ENCODE measurements at regions of chr6 and their contacts with region 1.

Region 1: GRCh38 chr6:100573167-100573566 is 108.4 kb upstream of the SIM1 start:
- DNase-seq: peak in 1 of 2 experiments; percentile 5
- H3K4me3 ChIP-seq: no peak overlapping the region
- H3K4me3 Mint-ChIP-seq: no peak overlapping the region
- H3K27ac Mint-ChIP-seq: no peak overlapping the region
- H3K4me1 ChIP-seq: no peaks in the 10 kb centered on the region
- H3K4me1 Mint-ChIP-seq: no peaks in the 10 kb centered on the region
- H3K27me3 ChIP-seq: no peaks in the 10 kb centered on the region
- H3K27me3 Mint-ChIP-seq: no peaks in the 10 kb centered on the region
- CTCF ChIP-seq: peak; percentile 46 to 50

Region 2: DNA sequence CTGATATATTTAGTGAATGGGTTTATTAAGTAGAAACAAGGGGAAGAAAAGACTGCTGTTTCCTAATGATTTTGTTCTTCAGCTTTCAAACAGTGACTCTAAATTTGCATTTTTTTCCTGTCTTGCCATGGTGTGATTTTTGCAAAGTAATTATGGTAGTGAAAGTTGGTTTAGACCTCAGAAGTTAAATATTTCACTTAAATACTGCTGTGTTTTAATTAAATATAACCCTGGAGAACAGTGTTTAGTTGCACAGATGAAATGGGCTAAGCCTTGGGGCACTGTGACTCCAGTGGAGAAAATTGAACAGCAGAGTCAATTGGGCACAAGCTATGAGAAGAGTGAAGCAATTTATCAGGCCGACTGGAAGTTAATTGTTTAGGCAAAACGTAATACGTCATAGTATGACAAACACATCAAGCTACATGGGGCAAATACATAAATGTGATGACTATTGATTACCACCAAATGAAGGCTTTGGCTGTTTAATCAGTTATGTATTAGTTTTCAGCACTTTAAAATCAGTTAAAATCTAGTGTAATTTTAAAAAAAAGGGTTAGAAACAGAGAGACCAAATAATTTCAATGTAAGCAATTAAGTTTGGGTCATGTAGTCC is 467.9 kb before region 1 on chr6:
- CTCF ChIA-PET with region 1: no interaction called
- POLR2A ChIA-PET with region 1: no interaction called
- intact Hi-C with region 1: loop called (anchors 1 kb)
- DNase-seq: no peak
- H3K4me3 ChIP-seq: no peak overlapping the region
- H3K4me3 Mint-ChIP-seq: no peak overlapping the region
- H3K27ac Mint-ChIP-seq: no peak overlapping the region
- H3K4me1 ChIP-seq: no peaks in the 10 kb centered on the region
- H3K4me1 Mint-ChIP-seq: no peaks in the 10 kb centered on the region
- H3K27me3 ChIP-seq: no peaks in the 10 kb centered on the region
- H3K27me3 Mint-ChIP-seq: no peaks in the 10 kb centered on the region
- CTCF ChIP-seq: no peak

Region 3: DNA sequence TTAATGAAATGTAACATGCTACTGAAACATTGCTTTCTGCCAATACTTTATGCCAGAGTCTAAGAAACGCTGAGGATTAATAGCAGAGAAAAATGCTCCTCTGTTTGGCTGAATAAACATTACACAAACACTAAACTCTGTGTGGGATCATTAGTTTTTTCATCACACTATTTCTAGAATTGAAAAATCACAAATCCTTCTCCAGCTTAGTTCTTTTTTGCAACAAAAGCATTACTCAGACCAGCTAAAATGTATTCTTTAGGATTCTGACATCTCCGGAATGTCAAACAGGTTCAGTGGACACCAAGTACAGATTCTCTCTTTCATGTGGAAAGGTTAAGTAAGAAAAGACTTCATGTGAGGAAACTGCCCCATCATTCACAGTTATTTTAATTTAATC is 335.3 kb before region 1 on chr6:
- CTCF ChIA-PET with region 1: no interaction called
- POLR2A ChIA-PET with region 1: no interaction called
- intact Hi-C with region 1: no loop called
- DNase-seq: no peak
- H3K4me3 ChIP-seq: no peak overlapping the region
- H3K4me3 Mint-ChIP-seq: no peak overlapping the region
- H3K27ac Mint-ChIP-seq: no peak overlapping the region
- H3K4me1 ChIP-seq: peaks cover 14% of the 10 kb centered on the region
- H3K4me1 Mint-ChIP-seq: peaks cover 7% of the 10 kb centered on the region
- H3K27me3 ChIP-seq: no peaks in the 10 kb centered on the region
- H3K27me3 Mint-ChIP-seq: no peaks in the 10 kb centered on the region
- CTCF ChIP-seq: no peak

Region 4: DNA sequence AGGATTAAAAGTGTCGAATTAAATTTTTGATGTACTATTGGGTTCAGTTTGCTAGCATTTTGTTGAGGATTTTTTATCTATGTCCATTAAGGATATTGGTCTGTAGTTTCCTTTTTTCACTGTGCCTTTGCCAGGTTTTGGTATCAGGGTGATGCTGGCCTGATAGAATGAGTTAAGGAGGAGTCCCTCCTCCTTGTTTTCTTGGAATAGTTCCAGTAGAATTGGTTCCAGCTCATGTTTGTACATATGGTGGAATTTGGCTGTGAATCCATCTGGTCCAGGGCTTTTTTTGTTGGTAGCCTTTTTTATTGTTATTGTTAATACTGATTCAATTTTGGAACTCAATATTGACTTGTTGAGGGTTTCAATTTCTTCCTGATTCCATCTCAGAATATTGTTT is 250.3 kb before region 1 on chr6:
- CTCF ChIA-PET with region 1: no interaction called
- POLR2A ChIA-PET with region 1: no interaction called
- intact Hi-C with region 1: loop called (anchors 1 kb)
- DNase-seq: no peak
- H3K4me3 ChIP-seq: no peak overlapping the region
- H3K4me3 Mint-ChIP-seq: no peak overlapping the region
- H3K27ac Mint-ChIP-seq: no peak overlapping the region
- H3K4me1 ChIP-seq: no peaks in the 10 kb centered on the region
- H3K4me1 Mint-ChIP-seq: no peaks in the 10 kb centered on the region
- H3K27me3 ChIP-seq: no peaks in the 10 kb centered on the region; the same call in 1 of the 2 replicates
- H3K27me3 Mint-ChIP-seq: no peaks in the 10 kb centered on the region
- CTCF ChIP-seq: no peak

Region 5: GRCh38 chr6:100415780-100416179 is 157.4 kb before region 1 on chr6:
- CTCF ChIA-PET with region 1: no interaction called
- POLR2A ChIA-PET with region 1: no interaction called
- intact Hi-C with region 1: no loop called
- DNase-seq: no peak
- H3K4me3 ChIP-seq: no peak overlapping the region
- H3K4me3 Mint-ChIP-seq: no peak overlapping the region
- H3K27ac Mint-ChIP-seq: no peak overlapping the region
- H3K4me1 ChIP-seq: no peaks in the 10 kb centered on the region
- H3K4me1 Mint-ChIP-seq: peaks cover 5% of the 10 kb centered on the region
- H3K27me3 ChIP-seq: no peaks in the 10 kb centered on the region
- H3K27me3 Mint-ChIP-seq: peaks cover 3% of the 10 kb centered on the region
- CTCF ChIP-seq: no peak

Region 6: GRCh38 chr6:100620085-100620840 is 47.1 kb after region 1 on chr6:
- CTCF ChIA-PET with region 1: no interaction called
- POLR2A ChIA-PET with region 1: no interaction called
- intact Hi-C with region 1: no loop called
- DNase-seq: no peak
- H3K4me3 ChIP-seq: no peak overlapping the region
- H3K4me3 Mint-ChIP-seq: no peak overlapping the region
- H3K27ac Mint-ChIP-seq: no peak overlapping the region
- H3K4me1 ChIP-seq: no peaks in the 10 kb centered on the region
- H3K4me1 Mint-ChIP-seq: no peaks in the 10 kb centered on the region
- H3K27me3 ChIP-seq: no peaks in the 10 kb centered on the region
- H3K27me3 Mint-ChIP-seq: no peaks in the 10 kb centered on the region
- CTCF ChIP-seq: no peak

Measured in Caco-2 (cell line).